Naive thymus-derived CD8-positive, alpha-beta T cell (primary cell): ENCODE measurements at regions of chr11 and their contacts with region 1.

Region 1: DNA sequence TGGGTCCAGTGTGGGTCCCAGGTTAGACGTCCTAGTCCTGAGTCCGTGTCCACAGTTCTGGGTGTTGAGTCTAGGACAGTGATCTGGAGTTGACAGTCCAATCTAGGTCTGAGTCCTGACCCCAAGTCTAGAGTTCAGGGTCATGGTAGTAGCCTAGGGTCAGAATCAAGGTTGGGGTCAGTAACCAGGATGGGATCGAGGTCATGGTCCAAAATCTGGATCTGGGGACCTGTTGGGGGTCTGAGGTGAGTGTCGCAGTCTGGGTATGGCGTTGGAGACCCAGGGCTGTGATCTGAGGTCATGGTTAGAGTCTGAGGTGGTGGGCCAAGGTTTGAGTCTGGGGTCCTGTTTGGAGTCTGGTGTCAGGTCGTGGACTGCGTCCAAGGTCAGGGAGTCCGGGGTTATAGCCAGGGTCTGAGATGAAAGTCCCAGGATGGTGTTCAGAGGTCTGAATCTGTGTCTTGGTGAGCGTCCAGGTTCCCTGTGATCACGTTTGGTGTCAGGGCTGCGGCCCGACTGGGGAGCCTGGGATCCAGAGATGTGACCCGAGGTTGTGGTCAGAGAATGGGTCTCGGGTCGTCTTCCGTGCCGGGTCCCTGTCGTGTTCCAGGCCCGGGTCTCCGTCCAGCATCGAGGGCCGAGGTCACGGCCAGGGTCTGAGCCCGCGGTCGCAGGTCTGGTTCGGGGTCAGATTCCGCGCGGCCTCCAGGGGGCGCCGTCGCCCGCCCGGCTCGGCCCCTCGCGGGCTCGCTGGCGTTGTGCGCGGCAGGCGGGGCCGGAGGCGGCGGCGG is 445 bp upstream of the GRK2 start:
- DNase-seq: peak; percentile 57 to 84 (median 79)
- ATAC-seq: peak; percentile 43 to 49
- H3K4me3 Mint-ChIP-seq: peak overlapping the region; percentile 74 to 98 (median 81)
- H3K27ac Mint-ChIP-seq: peak overlapping the region; percentile 70 to 90 (median 88)
- H3K4me1 Mint-ChIP-seq: peaks cover 36 to 67% (median 65%) of the 10 kb centered on the region in 4 donors
- H3K27me3 Mint-ChIP-seq: no peaks in the 10 kb centered on the region

Region 2: DNA sequence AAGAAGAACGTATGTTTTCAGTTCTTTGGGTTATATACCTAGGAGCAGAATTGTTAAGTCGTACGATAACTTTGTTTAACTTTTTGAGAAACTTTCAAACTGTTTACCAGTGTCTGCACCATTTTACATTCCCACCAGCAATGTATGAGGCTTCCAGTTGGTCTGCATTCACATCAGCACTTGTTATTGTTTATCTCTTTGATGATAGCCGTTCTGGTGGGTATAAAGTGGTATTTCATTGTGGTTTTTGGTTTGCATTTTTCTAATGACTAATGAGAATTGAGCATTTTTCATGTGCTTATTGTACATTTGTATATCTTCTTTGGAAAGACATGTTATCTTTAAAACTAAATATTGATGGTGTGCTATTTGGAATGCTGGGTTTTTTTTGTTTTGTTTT is 87.0 kb before region 1 on chr11:
- POLR2A ChIA-PET with region 1: no interaction called
- DNase-seq: no peak
- ATAC-seq: no peak
- H3K4me3 Mint-ChIP-seq: no peak overlapping the region
- H3K27ac Mint-ChIP-seq: peak overlapping the region in 2 of 10 donors; percentile 49 to 51
- H3K4me1 Mint-ChIP-seq: peaks cover 11 to 34% (median 27%) of the 10 kb centered on the region in 4 donors
- H3K27me3 Mint-ChIP-seq: no peaks in the 10 kb centered on the region

Region 3: DNA sequence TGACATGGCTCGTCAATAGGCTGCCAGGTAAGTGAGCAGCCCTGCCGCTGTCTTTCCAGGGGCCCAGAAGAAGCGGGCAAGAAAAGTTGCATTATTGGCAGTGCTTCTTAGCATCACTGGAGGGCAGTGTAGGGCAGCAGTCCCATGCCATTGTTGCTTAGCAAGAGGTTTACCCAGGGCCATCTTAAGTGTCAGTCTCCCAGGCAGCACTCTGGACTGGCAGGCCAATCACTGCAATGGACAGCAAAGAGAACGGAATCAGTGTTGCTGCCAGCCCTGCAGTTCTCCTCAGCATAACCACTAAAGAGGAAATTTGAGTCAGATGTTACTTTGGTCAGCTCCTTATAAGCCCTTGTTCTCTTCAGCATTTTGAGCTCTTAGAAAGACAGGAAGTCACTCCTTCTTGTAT is 13.0 kb before region 1 on chr11:
- POLR2A ChIA-PET with region 1: interaction called, 17 read pairs
- DNase-seq: peak in 5 of 10 donors; percentile 41 to 56 (median 52)
- ATAC-seq: peak; percentile 62 to 84
- H3K4me3 Mint-ChIP-seq: peak overlapping the region in 4 of 10 donors; percentile 0 to 41 (median 10)
- H3K27ac Mint-ChIP-seq: peak overlapping the region; percentile 12 to 87 (median 68)
- H3K4me1 Mint-ChIP-seq: peaks cover 20 to 50% (median 30%) of the 10 kb centered on the region in 4 donors
- H3K27me3 Mint-ChIP-seq: no peaks in the 10 kb centered on the region

Region 4: DNA sequence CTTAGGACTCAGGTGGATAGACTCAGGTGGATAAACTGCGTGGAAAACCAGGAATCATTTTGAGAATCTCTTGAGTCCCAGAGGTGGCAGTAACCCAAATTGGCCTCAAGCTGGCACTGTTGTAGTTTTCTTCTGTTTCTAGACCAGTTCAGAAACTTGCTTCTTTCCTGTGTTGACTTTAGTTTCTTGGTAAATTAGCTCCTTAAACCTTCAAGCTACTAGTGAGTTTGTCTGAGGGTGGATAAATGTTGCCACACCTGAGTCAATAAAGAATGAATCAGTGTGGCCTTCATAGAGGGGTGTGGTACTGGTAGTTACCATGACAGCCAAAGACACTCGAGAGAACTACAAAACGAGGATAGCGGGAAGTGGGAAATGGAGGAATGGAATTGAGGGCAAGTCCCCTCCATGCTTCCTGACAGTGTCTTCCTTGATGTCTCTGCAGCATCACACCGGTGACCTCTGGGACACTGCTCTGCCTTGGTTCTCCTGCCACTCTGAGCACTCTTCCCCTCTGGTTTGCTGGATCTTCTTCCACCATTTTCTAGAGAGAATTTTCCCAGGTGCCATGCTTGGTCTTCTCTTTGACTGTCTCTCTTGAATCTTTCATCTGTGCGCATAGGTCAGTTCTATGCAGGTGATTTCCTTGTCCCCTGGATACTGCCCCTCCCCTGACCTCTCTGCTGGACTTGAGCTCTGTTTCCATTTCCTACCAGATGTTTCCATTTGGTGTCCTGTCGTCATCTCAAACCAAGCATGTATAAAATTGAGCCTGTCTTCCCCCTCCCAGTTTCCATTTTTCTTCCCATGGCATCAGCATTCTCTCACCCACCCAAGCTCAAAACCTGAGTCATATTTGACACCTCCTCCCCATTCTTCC is 80.3 kb after region 1 on chr11:
- POLR2A ChIA-PET with region 1: interaction called, 37 read pairs
- DNase-seq: peak in 3 of 10 donors; percentile 29 to 57 (median 47)
- ATAC-seq: peak; percentile 58 to 74
- H3K4me3 Mint-ChIP-seq: peak overlapping the region in 8 of 10 donors; percentile 12 to 76 (median 66)
- H3K27ac Mint-ChIP-seq: peak overlapping the region in 9 of 10 donors; percentile 89 to 99 (median 94)
- H3K4me1 Mint-ChIP-seq: peaks cover 29 to 65% (median 61%) of the 10 kb centered on the region in 4 donors
- H3K27me3 Mint-ChIP-seq: no peaks in the 10 kb centered on the region

Region 5: GRCh38 chr11:67420646-67421420 is 155.0 kb after region 1 on chr11:
- POLR2A ChIA-PET with region 1: interaction called, 10 read pairs
- DNase-seq: peak; percentile 97 to 100 (median 99)
- ATAC-seq: peak; percentile 64 to 76
- H3K4me3 Mint-ChIP-seq: peak overlapping the region; percentile 76 to 94 (median 86)
- H3K27ac Mint-ChIP-seq: peak overlapping the region; percentile 80 to 100 (median 93)
- H3K4me1 Mint-ChIP-seq: peaks cover 23 to 67% (median 58%) of the 10 kb centered on the region in 4 donors
- H3K27me3 Mint-ChIP-seq: no peaks in the 10 kb centered on the region